ENCODE measurements at regions of chrX and their contacts with region 1.

Region 1: DNA sequence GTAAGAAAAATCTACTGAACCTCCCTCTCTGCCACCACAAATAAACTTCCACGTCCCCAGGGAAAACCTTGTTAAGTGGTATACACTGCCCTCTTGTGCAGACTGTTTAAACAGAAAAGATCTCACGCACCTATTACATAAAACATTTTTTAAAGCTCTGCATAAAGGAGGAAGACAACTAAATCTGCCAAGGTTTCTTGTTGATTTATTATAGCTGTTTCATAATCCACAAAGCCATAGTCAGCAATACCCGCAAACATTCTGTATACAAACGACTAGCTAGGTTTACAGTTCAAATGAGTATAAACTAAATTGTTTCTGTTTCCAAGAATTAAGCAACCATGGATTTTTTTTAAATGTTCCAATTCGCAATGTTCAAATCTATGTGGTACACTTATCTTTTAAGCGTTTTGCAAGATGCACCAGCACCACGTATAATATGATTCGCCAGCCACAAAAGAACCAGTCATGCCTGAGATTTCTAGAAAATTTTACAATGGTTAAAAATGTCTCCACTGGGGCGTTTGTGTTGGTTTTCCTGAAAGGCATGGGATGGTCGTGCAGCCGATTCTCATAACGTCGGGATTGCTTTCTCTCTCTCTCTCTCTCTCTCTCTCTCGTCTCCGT is 164.6 kb downstream of the PRKX start:
- DNase-seq: peak; percentile 7
- ATAC-seq: peak; percentile 53; the same call in 1 of the 2 replicates
- H3K4me3 ChIP-seq: no peak overlapping the region
- H3K27ac ChIP-seq: no peak overlapping the region
- H3K4me1 ChIP-seq: no peaks in the 10 kb centered on the region
- H3K27me3 ChIP-seq: no peaks in the 10 kb centered on the region
- CTCF ChIP-seq: peak in 2 of 3 experiments; percentile 29 to 40; a peak in 2 of 6 replicates
- POLR2A ChIP-seq: no peak
- RAD21 ChIP-seq: peak; percentile 69

Region 2: GRCh38 chrX:3037218-3037617 is 511.7 kb before region 1 on chrX:
- CTCF ChIA-PET with region 1: no interaction called
- POLR2A ChIA-PET with region 1: no interaction called
- RAD21 ChIA-PET with region 1: no interaction called
- intact Hi-C with region 1: loop called (anchors 1 kb)
- DNase-seq: no peak
- ATAC-seq: no peak
- H3K4me3 ChIP-seq: no peak overlapping the region
- H3K27ac ChIP-seq: no peak overlapping the region
- H3K4me1 ChIP-seq: no peaks in the 10 kb centered on the region; a peak in 1 of 4 replicates
- H3K27me3 ChIP-seq: no peaks in the 10 kb centered on the region
- CTCF ChIP-seq: no peak
- POLR2A ChIP-seq: no peak
- RAD21 ChIP-seq: no peak

Region 3: GRCh38 chrX:3119376-3119775 is 429.5 kb before region 1 on chrX:
- CTCF ChIA-PET with region 1: interaction called, 10 read pairs
- POLR2A ChIA-PET with region 1: no interaction called
- RAD21 ChIA-PET with region 1: interaction called in 1 of 2 experiments, 3 read pairs
- intact Hi-C with region 1: loop called (anchors 5 kb)
- DNase-seq: no peak
- ATAC-seq: no peak
- H3K4me3 ChIP-seq: no peak overlapping the region
- H3K27ac ChIP-seq: no peak overlapping the region
- H3K4me1 ChIP-seq: no peaks in the 10 kb centered on the region
- H3K27me3 ChIP-seq: no peaks in the 10 kb centered on the region
- CTCF ChIP-seq: no peak
- POLR2A ChIP-seq: no peak
- RAD21 ChIP-seq: no peak

Region 4: DNA sequence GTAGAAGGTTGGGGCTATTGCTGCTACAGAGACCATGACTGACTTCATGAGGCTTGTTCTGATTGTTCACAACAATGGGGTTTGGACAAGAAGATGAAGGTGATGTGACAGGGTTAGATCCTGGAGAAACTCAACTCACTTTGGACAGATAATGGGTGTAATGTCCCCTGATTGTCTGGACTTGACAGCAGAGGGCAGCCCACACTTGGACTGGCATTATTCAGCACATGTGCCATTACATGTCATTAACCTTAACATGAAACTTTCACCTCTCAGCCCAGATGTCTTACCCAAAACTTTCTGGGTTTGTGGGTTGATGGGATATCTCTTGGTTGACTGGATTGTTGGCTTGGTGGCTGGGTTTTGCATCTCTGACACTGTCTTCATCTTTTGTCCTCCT is 303.9 kb before region 1 on chrX:
- CTCF ChIA-PET with region 1: interaction called, 4 read pairs
- POLR2A ChIA-PET with region 1: no interaction called
- RAD21 ChIA-PET with region 1: no interaction called
- intact Hi-C with region 1: loop called (anchors 5 kb)
- DNase-seq: no peak
- ATAC-seq: no peak
- H3K4me3 ChIP-seq: no peak overlapping the region
- H3K27ac ChIP-seq: no peak overlapping the region
- H3K4me1 ChIP-seq: no peaks in the 10 kb centered on the region
- H3K27me3 ChIP-seq: no peaks in the 10 kb centered on the region
- CTCF ChIP-seq: peak; percentile 6 to 22 (median 12); a peak in 2 of 6 replicates
- POLR2A ChIP-seq: no peak
- RAD21 ChIP-seq: peak; percentile 65